GM12878 (cell line): ENCODE measurements at regions of chrX and their contacts with region 1.

Region 1: GRCh38 chrX:63050225-63050624 is 300.9 kb downstream of the SPIN4 start:
- DNase-seq: peak; percentile 11
- ATAC-seq: peak; percentile 91
- H3K4me3 ChIP-seq: no peak overlapping the region
- H3K27ac ChIP-seq: no peak overlapping the region
- H3K4me1 ChIP-seq: no peaks in the 10 kb centered on the region
- H3K27me3 ChIP-seq: no peaks in the 10 kb centered on the region
- CTCF ChIP-seq: peak; percentile 49 to 57 (median 56); a peak in 4 of 6 replicates
- EP300 ChIP-seq: no peak
- POLR2A ChIP-seq: no peak
- RAD21 ChIP-seq: peak; percentile 74

Region 2: GRCh38 chrX:63128509-63128908 is 78.3 kb after region 1 on chrX:
- CTCF ChIA-PET with region 1: interaction called, 19 read pairs
- POLR2A ChIA-PET with region 1: interaction called, 3 read pairs
- RAD21 ChIA-PET with region 1: interaction called, 18 read pairs
- SMC1A ChIA-PET with region 1: interaction called, 15 read pairs
- in situ Hi-C with region 1: no loop called
- intact Hi-C with region 1: no loop called
- DNase-seq: peak; percentile 53
- ATAC-seq: peak; percentile 98
- H3K4me3 ChIP-seq: no peak overlapping the region
- H3K27ac ChIP-seq: no peak overlapping the region
- H3K4me1 ChIP-seq: no peaks in the 10 kb centered on the region
- H3K27me3 ChIP-seq: no peaks in the 10 kb centered on the region
- CTCF ChIP-seq: peak; percentile 51 to 66 (median 59)
- EP300 ChIP-seq: no peak
- POLR2A ChIP-seq: no peak
- RAD21 ChIP-seq: peak; percentile 43; the same call in 1 of the 2 replicates

Region 3: DNA sequence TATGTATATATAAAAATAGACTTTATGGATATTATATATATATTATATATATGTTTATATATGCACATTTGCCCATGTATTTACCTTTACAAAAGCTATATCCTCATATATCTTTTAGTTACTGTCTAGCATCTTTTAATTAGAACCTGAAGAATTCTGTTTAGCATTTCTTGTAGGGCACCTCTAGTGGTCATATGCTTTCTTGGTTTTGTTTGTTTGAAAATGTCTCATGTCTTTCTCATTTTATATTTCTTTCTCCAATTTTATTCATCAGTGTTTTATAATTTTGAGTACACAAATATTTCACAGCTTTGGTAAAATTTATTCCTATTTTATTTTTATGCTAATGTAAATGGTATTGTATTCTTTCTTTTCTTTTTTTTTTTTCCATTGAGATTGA is 371.2 kb after region 1 on chrX:
- CTCF ChIA-PET with region 1: no interaction called
- POLR2A ChIA-PET with region 1: no interaction called
- RAD21 ChIA-PET with region 1: no interaction called
- SMC1A ChIA-PET with region 1: no interaction called
- in situ Hi-C with region 1: no loop called
- intact Hi-C with region 1: no loop called
- DNase-seq: no peak
- ATAC-seq: no peak
- H3K4me3 ChIP-seq: no peak overlapping the region
- H3K27ac ChIP-seq: no peak overlapping the region
- H3K4me1 ChIP-seq: no peaks in the 10 kb centered on the region
- H3K27me3 ChIP-seq: no peaks in the 10 kb centered on the region
- CTCF ChIP-seq: no peak
- EP300 ChIP-seq: no peak
- POLR2A ChIP-seq: no peak
- RAD21 ChIP-seq: no peak

Region 4: GRCh38 chrX:63686878-63687714 is 636.9 kb after region 1 on chrX:
- CTCF ChIA-PET with region 1: interaction called, 3 read pairs
- POLR2A ChIA-PET with region 1: no interaction called
- RAD21 ChIA-PET with region 1: no interaction called
- SMC1A ChIA-PET with region 1: no interaction called
- in situ Hi-C with region 1: no loop called
- intact Hi-C with region 1: loop called (anchors 5 kb)
- DNase-seq: peak; percentile 20
- ATAC-seq: peak; percentile 92
- H3K4me3 ChIP-seq: no peak overlapping the region
- H3K27ac ChIP-seq: no peak overlapping the region
- H3K4me1 ChIP-seq: no peaks in the 10 kb centered on the region
- H3K27me3 ChIP-seq: no peaks in the 10 kb centered on the region
- CTCF ChIP-seq: peak; percentile 58 to 72 (median 69)
- EP300 ChIP-seq: no peak
- POLR2A ChIP-seq: no peak
- RAD21 ChIP-seq: peak; percentile 72